Sigmoid colon (tissue), 7 donors: ENCODE measurements at regions of chr14 and their contacts with region 1.

Region 1: GRCh38 chr14:49585803-49586672 is at the start of gene RPS29:
- DNase-seq: peak; percentile 99
- H3K4me3 ChIP-seq: peak within 1 kb of the TSS; percentile 68 to 77 (median 72)
- H3K27ac ChIP-seq: peak within 1 kb of the TSS; percentile 83 to 97 (median 90)
- H3K4me1 ChIP-seq: peaks cover 0 to 29% (median 23%) of the 10 kb centered on the region in 4 donors
- H3K27me3 ChIP-seq: no peaks in the 10 kb centered on the region
- CTCF ChIP-seq: no peak
- EP300 ChIP-seq: peak in 1 of 4 donors; percentile 60
- POLR2A ChIP-seq: peak; percentile 92 to 94
- total RNA-seq, gene RPS29: 3,416 to 22,215 (median 11,134) TPM

Region 2: DNA sequence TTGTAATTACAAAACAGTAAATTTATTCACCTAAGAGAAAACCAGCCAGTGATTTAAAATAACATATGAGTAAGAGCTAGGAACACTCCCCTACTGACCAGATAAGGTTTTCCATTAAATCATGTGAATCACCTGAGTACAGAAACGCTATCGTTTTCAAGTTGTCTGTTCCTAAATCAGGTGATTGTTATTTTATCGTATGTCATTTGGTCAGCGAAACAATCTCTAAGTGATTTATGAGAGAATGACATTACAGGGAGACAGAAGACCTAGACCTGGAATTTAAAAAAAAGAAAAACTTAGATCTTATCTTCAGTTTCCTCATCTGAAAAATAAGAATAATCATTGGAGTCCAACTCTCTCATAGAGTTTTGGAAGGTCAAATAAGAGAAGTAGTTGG is 47.1 kb before region 1 on chr14:
- intact Hi-C with region 1: no loop called
- DNase-seq: no peak
- H3K4me3 ChIP-seq: no peak overlapping the region
- H3K27ac ChIP-seq: no peak overlapping the region
- H3K4me1 ChIP-seq: no peaks in the 10 kb centered on the region
- H3K27me3 ChIP-seq: no peaks in the 10 kb centered on the region
- CTCF ChIP-seq: no peak
- EP300 ChIP-seq: no peak
- POLR2A ChIP-seq: no peak

Region 3: GRCh38 chr14:49598485-49599300 is 12.7 kb after region 1 on chr14 and contains the start of gene LRR1:
- intact Hi-C with region 1: loop called (anchors 1 kb)
- DNase-seq: peak; percentile 89
- H3K4me3 ChIP-seq: peak within 1 kb of the TSS; percentile 77 to 94 (median 85)
- H3K27ac ChIP-seq: peak within 1 kb of the TSS; percentile 93 to 98 (median 96)
- H3K4me1 ChIP-seq: peaks cover 0 to 15% (median 4%) of the 10 kb centered on the region in 4 donors
- H3K27me3 ChIP-seq: no peaks in the 10 kb centered on the region
- CTCF ChIP-seq: no peak
- EP300 ChIP-seq: no peak
- POLR2A ChIP-seq: peak; percentile 28 to 39
- total RNA-seq, gene LRR1: 6.8 to 9.7 (median 8.2) TPM